CD4-positive, alpha-beta T cell (primary cell): ENCODE measurements at regions of chr19 and their contacts with region 1.

Region 1: GRCh38 chr19:48993175-48994034 is at the starts of genes GYS1 and RUVBL2:
- DNase-seq: peak; percentile 98 to 100 (median 99)
- ATAC-seq: peak; percentile 92
- H3K4me3 ChIP-seq: peak within 1 kb of the TSS; percentile 84
- H3K4me3 Mint-ChIP-seq: peak within 1 kb of the TSS; percentile 92
- H3K27ac ChIP-seq: peak within 1 kb of the TSS; percentile 82 to 83
- H3K27ac Mint-ChIP-seq: peak within 1 kb of the TSS; percentile 90
- H3K4me1 ChIP-seq: peaks cover 43% of the 10 kb centered on the region
- H3K4me1 Mint-ChIP-seq: peaks cover 46% of the 10 kb centered on the region
- H3K27me3 ChIP-seq: no peaks in the 10 kb centered on the region
- H3K27me3 Mint-ChIP-seq: no peaks in the 10 kb centered on the region
- CTCF ChIP-seq: peak; percentile 97
- total RNA-seq, gene GYS1: 13.2 to 14.1 TPM
- total RNA-seq, gene RUVBL2: 10.7 to 12.3 TPM

Region 2: GRCh38 chr19:48624067-48624594 is 369.3 kb before region 1 on chr19:
- CTCF ChIA-PET with region 1: interaction called, 3 read pairs
- POLR2A ChIA-PET with region 1: interaction called, 9 read pairs
- intact Hi-C with region 1: loop called in 1 of 2 experiments (anchors 10 kb)
- DNase-seq: peak; percentile 88 to 98 (median 95)
- ATAC-seq: peak; percentile 77
- H3K4me3 ChIP-seq: peak overlapping the region; percentile 48
- H3K4me3 Mint-ChIP-seq: peak overlapping the region; percentile 86
- H3K27ac ChIP-seq: peak overlapping the region; percentile 57 to 58
- H3K27ac Mint-ChIP-seq: peak overlapping the region; percentile 77
- H3K4me1 ChIP-seq: peaks cover 45% of the 10 kb centered on the region
- H3K4me1 Mint-ChIP-seq: peaks cover 40% of the 10 kb centered on the region
- H3K27me3 ChIP-seq: no peaks in the 10 kb centered on the region
- H3K27me3 Mint-ChIP-seq: no peaks in the 10 kb centered on the region
- CTCF ChIP-seq: no peak

Region 3: DNA sequence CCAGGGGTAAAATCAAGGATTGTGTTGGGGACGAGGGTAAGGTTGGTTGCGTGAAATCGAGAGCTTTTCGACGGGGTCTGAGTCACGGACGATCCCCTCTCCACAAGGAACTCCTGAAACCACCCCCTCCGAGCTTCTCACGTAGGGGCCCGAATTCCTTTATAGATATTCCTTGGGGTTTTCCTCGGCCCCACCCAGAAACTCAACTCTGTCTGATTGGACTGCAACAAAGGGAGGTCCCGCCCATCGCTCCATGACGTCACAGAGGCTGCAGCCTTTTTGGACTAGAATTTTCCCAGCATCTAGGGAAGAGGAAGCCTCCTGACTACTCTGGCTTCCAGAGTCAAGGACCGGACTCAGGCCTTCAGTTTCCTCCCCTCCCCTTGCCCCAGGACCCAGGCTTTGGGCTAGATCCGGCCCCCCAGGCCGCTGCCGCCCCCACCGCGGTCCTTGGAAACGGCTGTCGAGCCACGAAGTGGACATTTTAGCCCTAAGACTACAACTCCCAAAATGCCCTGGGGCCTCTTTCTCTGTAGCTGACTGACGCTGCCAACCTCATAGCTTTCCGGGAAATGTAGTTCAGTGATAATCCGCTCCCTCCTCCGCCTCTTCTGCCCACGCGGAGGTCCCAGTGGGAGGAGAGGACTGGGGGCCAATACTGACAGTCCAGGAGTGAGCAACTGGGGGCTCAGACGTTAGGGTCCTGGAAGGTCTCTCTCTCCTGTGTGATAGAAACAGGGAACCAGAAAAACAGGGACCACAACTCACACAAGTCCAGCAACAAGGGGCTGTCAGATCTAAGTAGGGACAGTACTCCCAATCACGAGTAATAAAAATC is 246.4 kb before region 1 on chr19 and contains the start of gene IZUMO1:
- CTCF ChIA-PET with region 1: no interaction called
- POLR2A ChIA-PET with region 1: no interaction called
- intact Hi-C with region 1: loop called in 1 of 2 experiments (anchors 5 kb)
- DNase-seq: peak in 10 of 14 experiments; percentile 15 to 79 (median 43)
- ATAC-seq: peak; percentile 82
- H3K4me3 ChIP-seq: no peak within 1 kb of the TSS
- H3K4me3 Mint-ChIP-seq: peak within 1 kb of the TSS; percentile 15
- H3K27ac ChIP-seq: no peak within 1 kb of the TSS
- H3K27ac Mint-ChIP-seq: no peak within 1 kb of the TSS
- H3K4me1 ChIP-seq: peaks cover 17% of the 10 kb centered on the region
- H3K4me1 Mint-ChIP-seq: peaks cover 19% of the 10 kb centered on the region
- H3K27me3 ChIP-seq: peaks cover 14 to 15% of the 10 kb centered on the region in 2 experiments
- H3K27me3 Mint-ChIP-seq: peaks cover 21% of the 10 kb centered on the region
- CTCF ChIP-seq: no peak
- total RNA-seq, gene IZUMO1: not detected

Region 4: GRCh38 chr19:48933382-48933932 is 59.9 kb before region 1 on chr19 and contains the start of gene DHDH:
- CTCF ChIA-PET with region 1: no interaction called
- POLR2A ChIA-PET with region 1: interaction called, 3 read pairs
- intact Hi-C with region 1: loop called in 1 of 2 experiments (anchors 2 kb)
- DNase-seq: peak; percentile 77 to 96 (median 86)
- ATAC-seq: peak; percentile 96
- H3K4me3 ChIP-seq: peak within 1 kb of the TSS; percentile 63
- H3K4me3 Mint-ChIP-seq: peak within 1 kb of the TSS; percentile 82
- H3K27ac ChIP-seq: peak within 1 kb of the TSS in 1 of 2 donors; percentile 25
- H3K27ac Mint-ChIP-seq: peak within 1 kb of the TSS; percentile 77
- H3K4me1 ChIP-seq: peaks cover 14% of the 10 kb centered on the region
- H3K4me1 Mint-ChIP-seq: peaks cover 20% of the 10 kb centered on the region
- H3K27me3 ChIP-seq: no peaks in the 10 kb centered on the region
- H3K27me3 Mint-ChIP-seq: no peaks in the 10 kb centered on the region
- CTCF ChIP-seq: no peak
- total RNA-seq, gene DHDH: 1.1 to 1.8 TPM

Region 5: GRCh38 chr19:49017666-49018351 is 24.4 kb after region 1 on chr19:
- CTCF ChIA-PET with region 1: interaction called, 14 read pairs
- POLR2A ChIA-PET with region 1: interaction called, 15 read pairs
- intact Hi-C with region 1: loop called in 1 of 2 experiments (anchors 2 kb)
- DNase-seq: peak; percentile 48 to 84 (median 64)
- ATAC-seq: peak; percentile 86
- H3K4me3 ChIP-seq: peak overlapping the region; percentile 63
- H3K4me3 Mint-ChIP-seq: peak overlapping the region; percentile 90
- H3K27ac ChIP-seq: peak overlapping the region in 1 of 2 donors; percentile 29
- H3K27ac Mint-ChIP-seq: no peak overlapping the region
- H3K4me1 ChIP-seq: peaks cover 40% of the 10 kb centered on the region
- H3K4me1 Mint-ChIP-seq: peaks cover 25% of the 10 kb centered on the region
- H3K27me3 ChIP-seq: peaks cover 0 to 4% of the 10 kb centered on the region in 2 experiments
- H3K27me3 Mint-ChIP-seq: peaks cover 5% of the 10 kb centered on the region
- CTCF ChIP-seq: peak; percentile 78

Region 6: GRCh38 chr19:49148784-49149651 is 155.6 kb after region 1 on chr19:
- CTCF ChIA-PET with region 1: no interaction called
- POLR2A ChIA-PET with region 1: no interaction called
- intact Hi-C with region 1: loop called in 1 of 2 experiments (anchors 5 kb)
- DNase-seq: peak; percentile 50 to 88 (median 72)
- ATAC-seq: peak; percentile 44
- H3K4me3 ChIP-seq: peak overlapping the region; percentile 62
- H3K4me3 Mint-ChIP-seq: peak overlapping the region; percentile 86
- H3K27ac ChIP-seq: no peak overlapping the region
- H3K27ac Mint-ChIP-seq: no peak overlapping the region
- H3K4me1 ChIP-seq: peaks cover 49% of the 10 kb centered on the region
- H3K4me1 Mint-ChIP-seq: peaks cover 52% of the 10 kb centered on the region
- H3K27me3 ChIP-seq: peaks cover 55 to 56% of the 10 kb centered on the region in 2 experiments
- H3K27me3 Mint-ChIP-seq: peaks cover 88% of the 10 kb centered on the region
- CTCF ChIP-seq: no peak